ENCODE measurements at regions of chr7 and their contacts with region 1.

Region 1: GRCh38 chr7:95660023-95660434 is 63.7 kb upstream of the PDK4 start:
- DNase-seq: peak; percentile 65 to 77
- ATAC-seq: peak; percentile 99 to 100
- H3K4me3 ChIP-seq: no peak overlapping the region
- H3K27ac ChIP-seq: peak overlapping the region; percentile 73 to 83 (median 74)
- H3K4me1 ChIP-seq: peaks cover 10 to 15% of the 10 kb centered on the region in 2 donors
- H3K27me3 ChIP-seq: no peaks in the 10 kb centered on the region
- CTCF ChIP-seq: no peak
- POLR2A ChIP-seq: peak in 1 of 2 donors; percentile 55

Region 2: DNA sequence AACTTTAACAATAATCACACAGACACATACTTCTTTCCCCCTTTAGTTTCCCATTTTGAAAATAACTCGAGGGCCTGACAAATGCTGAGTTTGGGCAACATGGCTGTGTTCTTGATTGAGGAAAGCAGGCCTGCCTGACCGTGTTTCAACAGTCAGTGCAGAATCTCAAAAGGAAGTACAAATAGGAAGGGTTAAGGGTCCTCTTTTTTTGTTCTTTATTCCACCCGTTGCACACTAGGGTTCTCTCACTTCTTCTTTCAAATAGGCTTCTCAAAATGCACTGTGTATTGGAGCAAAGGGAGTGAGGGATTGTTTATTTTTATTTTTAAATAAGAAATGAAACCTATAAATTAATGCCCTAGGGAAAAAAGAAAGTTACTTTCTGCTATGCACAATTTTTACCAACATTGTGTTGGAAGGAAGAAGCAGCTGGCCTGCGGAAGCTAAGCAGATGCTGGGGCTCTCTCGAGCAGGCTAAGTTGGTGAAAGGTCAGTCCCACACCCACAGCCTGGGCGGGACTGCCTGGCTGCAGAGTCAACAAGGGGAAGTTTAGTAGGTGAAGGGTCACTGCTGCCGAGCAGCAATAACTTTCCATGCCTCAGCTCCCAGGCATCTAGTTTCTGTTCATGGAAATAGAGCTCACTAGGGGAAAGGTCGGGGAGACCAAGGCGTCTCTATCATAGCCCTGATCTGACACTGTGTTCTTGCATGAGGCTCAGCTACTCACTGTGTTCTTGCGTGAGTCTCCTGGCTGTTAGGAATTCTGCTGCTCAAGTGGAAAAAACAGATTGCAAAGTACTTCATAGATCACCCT is 51.5 kb before region 1 on chr7:
- in situ Hi-C with region 1: no loop called
- intact Hi-C with region 1: loop called (anchors 1 kb)
- DNase-seq: peak; percentile 96 to 97
- ATAC-seq: peak; percentile 99
- H3K4me3 ChIP-seq: peak overlapping the region; percentile 45 to 56 (median 53)
- H3K27ac ChIP-seq: peak overlapping the region; percentile 89 to 93 (median 91)
- H3K4me1 ChIP-seq: peaks cover 41 to 53% of the 10 kb centered on the region in 2 donors
- H3K27me3 ChIP-seq: no peaks in the 10 kb centered on the region
- CTCF ChIP-seq: no peak
- POLR2A ChIP-seq: peak in 1 of 2 donors; percentile 72

Region 3: GRCh38 chr7:95628831-95629439 is 31.1 kb before region 1 on chr7:
- in situ Hi-C with region 1: no loop called
- intact Hi-C with region 1: loop called (anchors 1 kb)
- DNase-seq: peak; percentile 31 to 56
- ATAC-seq: peak; percentile 99
- H3K4me3 ChIP-seq: peak overlapping the region in 1 of 4 donors; percentile 16
- H3K27ac ChIP-seq: peak overlapping the region; percentile 79 to 88 (median 84)
- H3K4me1 ChIP-seq: peaks cover 18 to 23% of the 10 kb centered on the region in 2 donors
- H3K27me3 ChIP-seq: no peaks in the 10 kb centered on the region
- CTCF ChIP-seq: peak in 1 of 5 experiments; percentile 34
- POLR2A ChIP-seq: peak in 1 of 2 donors; percentile 54

Measured in gastrocnemius medialis (tissue), 4 donors.